ENCODE measurements at regions of chr17 and their contacts with region 1.

Region 1: GRCh38 chr17:40536295-40537171 is 28.7 kb downstream of the CCR7 start:
- DNase-seq: peak; percentile 79 to 83 (median 82)
- ATAC-seq: peak; percentile 47 to 74
- H3K4me3 ChIP-seq: no peak overlapping the region
- H3K27ac ChIP-seq: peak overlapping the region; percentile 73
- H3K4me1 ChIP-seq: peaks cover 36% of the 10 kb centered on the region
- H3K27me3 ChIP-seq: no peaks in the 10 kb centered on the region

Region 2: GRCh38 chr17:40303009-40303657 is 233.4 kb before region 1 on chr17:
- intact Hi-C with region 1: loop called in 2 of 4 experiments (anchors 10 kb)
- DNase-seq: no peak
- ATAC-seq: peak; percentile 48 to 62
- H3K4me3 ChIP-seq: no peak overlapping the region
- H3K27ac ChIP-seq: no peak overlapping the region
- H3K4me1 ChIP-seq: peaks cover 10% of the 10 kb centered on the region
- H3K27me3 ChIP-seq: no peaks in the 10 kb centered on the region

Region 3: DNA sequence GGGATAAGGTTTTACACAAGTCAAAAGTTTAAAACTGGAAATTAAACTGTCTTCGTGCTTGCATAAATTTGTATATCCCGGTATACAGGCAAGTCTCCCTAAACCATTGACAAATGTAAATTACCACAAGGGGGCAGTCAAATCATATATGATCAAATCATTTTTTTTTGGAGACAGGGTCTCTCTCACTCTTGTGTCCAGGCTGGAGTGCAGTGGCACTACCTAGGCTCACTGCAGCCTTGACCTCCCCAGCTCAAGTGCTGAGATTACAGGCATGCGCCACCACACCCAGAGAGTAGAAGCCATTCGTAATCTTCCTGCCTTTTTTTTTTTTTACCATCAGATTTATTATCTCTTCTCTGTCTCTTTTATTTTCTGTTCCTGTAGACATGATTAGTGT is 137.3 kb before region 1 on chr17:
- intact Hi-C with region 1: loop called in 2 of 4 experiments (anchors 10 kb)
- DNase-seq: no peak
- ATAC-seq: peak in 1 of 2 donors; percentile 55
- H3K4me3 ChIP-seq: no peak overlapping the region
- H3K27ac ChIP-seq: no peak overlapping the region
- H3K4me1 ChIP-seq: no peaks in the 10 kb centered on the region
- H3K27me3 ChIP-seq: no peaks in the 10 kb centered on the region

Region 4: DNA sequence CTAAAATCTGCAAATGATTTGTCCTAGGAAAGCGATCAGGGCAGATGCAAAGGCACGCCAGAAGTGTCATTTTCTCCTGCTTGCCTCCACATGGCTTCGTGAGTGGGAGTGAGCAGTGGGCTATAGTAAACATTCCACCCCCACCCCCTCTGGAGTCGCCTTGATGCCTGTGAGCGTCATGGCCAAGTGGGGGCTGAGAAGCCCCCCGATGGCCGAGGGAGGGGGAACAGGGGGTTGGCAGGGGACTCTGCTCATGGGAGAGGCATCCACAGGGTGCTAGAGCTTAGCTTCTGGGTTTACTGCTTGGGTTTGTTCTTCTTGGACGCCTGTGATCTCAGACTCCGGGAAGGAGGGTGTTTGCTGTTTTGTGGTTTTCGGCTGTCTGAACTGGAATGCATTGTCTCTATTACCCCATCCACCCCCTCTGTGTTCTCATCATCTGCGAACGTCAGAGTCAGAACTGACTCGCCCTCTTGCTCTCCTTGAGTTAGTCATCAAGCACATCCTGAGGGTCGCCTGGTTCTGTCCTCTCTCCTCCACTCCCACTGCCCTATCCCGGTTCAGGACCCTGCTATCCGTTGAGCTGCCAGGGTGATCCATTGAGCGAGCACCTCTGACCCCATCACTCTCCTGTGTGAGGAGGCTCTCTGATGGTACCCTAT is 50.6 kb before region 1 on chr17:
- intact Hi-C with region 1: loop called in 1 of 4 experiments (anchors 10 kb)
- DNase-seq: peak in 2 of 3 donors; percentile 46 to 61
- ATAC-seq: peak; percentile 53 to 81
- H3K4me3 ChIP-seq: no peak overlapping the region
- H3K27ac ChIP-seq: peak overlapping the region; percentile 16
- H3K4me1 ChIP-seq: no peaks in the 10 kb centered on the region
- H3K27me3 ChIP-seq: no peaks in the 10 kb centered on the region

Region 5: DNA sequence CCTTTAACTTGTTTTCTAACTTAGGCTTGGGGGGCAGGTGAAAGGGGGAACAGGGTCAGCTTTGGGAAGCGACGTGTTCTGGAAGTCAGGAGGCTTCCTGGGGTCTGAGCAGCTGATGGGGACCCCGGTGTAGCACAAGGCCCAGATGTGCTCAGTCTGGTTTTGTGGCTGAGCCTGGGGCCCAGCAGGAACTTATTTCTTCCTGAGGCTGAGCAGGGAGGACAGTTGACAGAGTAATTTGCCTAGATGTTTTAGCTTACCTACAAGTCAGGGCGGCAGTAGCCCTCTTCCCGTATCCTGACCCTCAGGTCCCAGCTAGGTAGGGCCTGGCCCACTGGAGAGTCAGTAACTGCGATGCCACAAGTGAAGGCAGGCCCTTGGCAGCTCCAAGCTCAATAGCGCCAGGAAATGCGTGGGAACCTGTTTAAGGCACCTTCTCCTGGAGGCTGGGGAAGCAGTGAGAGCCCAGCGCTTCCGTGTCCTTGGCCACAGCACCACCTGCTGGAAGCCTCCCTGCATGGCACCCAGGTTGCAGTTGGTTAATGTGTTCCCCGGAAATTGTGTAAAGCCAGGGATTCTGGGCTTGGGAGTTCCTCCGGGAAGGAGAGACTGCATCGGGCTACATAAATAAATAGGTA is 23.5 kb after region 1 on chr17:
- intact Hi-C with region 1: loop called in 1 of 4 experiments (anchors 2 kb)
- DNase-seq: peak; percentile 87 to 94 (median 94)
- ATAC-seq: peak; percentile 74 to 82
- H3K4me3 ChIP-seq: no peak overlapping the region
- H3K27ac ChIP-seq: peak overlapping the region; percentile 74
- H3K4me1 ChIP-seq: peaks cover 21% of the 10 kb centered on the region
- H3K27me3 ChIP-seq: no peaks in the 10 kb centered on the region